Endothelial cell of umbilical vein (primary cell): ENCODE measurements at regions of chr1 and their contacts with region 1.

Region 1: DNA sequence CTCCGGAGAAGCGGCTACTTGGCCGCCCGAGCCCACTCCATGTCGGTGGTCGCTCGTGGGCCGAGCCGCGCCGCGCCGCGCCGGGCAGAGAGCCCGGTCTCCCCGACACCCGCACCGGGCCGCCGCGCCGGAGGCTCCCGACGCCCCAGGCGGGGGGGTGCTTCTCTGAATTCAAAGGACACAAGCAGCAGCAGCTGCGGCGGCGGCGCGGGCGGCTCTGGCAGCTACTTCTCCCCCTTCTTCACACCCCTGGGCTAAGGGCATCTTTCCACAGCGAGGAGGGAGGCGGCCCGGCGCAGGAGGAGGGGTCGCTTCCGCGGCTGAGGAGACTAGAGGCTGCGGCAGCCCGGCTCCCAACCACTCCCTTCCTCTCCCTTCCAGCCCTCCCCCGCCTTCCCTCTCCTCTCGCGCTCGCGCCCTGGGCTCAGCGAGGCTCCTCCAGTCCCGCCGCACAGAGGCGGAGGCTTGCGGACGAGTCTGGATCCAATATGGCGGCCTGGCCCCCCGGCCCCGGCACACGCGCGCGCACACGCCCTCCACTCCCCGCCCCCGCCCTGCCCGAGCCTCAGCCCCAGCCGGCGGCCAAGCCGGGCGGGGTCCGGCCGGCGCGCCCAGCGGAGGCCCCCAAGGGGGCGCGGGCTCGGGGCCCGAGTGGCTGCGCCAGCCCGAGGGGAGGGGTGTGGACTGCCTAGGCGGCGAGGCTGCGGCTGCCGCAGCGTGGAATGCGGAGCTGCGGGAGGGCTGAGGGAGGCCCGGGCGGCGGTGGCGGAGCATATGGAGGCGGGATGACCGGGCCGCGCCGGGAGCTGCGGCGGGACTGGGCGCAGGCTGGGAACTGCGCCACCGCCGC is at the start of gene CDC42BPA:
- DNase-seq: peak; percentile 93
- H3K4me3 ChIP-seq: peak within 1 kb of the TSS; percentile 96 to 100 (median 97)
- H3K27ac ChIP-seq: peak within 1 kb of the TSS; percentile 92
- H3K4me1 ChIP-seq: peaks cover 15% of the 10 kb centered on the region
- H3K27me3 ChIP-seq: no peaks in the 10 kb centered on the region
- CTCF ChIP-seq: peak in 1 of 2 donors; percentile 3
- POLR2A ChIP-seq: no peak
- total RNA-seq, gene CDC42BPA: 88.1 and 92.6 TPM in 2 replicates

Region 2: GRCh38 chr1:226551299-226551698 is 766.9 kb before region 1 on chr1:
- CTCF ChIA-PET with region 1: no interaction called
- POLR2A ChIA-PET with region 1: no interaction called
- dilution Hi-C with region 1: no loop called
- intact Hi-C with region 1: no loop called
- DNase-seq: no peak
- H3K4me3 ChIP-seq: no peak overlapping the region
- H3K27ac ChIP-seq: no peak overlapping the region
- H3K4me1 ChIP-seq: peaks cover 2% of the 10 kb centered on the region
- H3K27me3 ChIP-seq: peaks cover 56 to 59% of the 10 kb centered on the region in 2 experiments
- CTCF ChIP-seq: no peak
- POLR2A ChIP-seq: no peak

Region 3: GRCh38 chr1:226915672-226915995 is 402.6 kb before region 1 on chr1:
- CTCF ChIA-PET with region 1: no interaction called
- POLR2A ChIA-PET with region 1: no interaction called
- dilution Hi-C with region 1: no loop called
- intact Hi-C with region 1: no loop called
- DNase-seq: no peak
- H3K4me3 ChIP-seq: no peak overlapping the region
- H3K27ac ChIP-seq: no peak overlapping the region
- H3K4me1 ChIP-seq: no peaks in the 10 kb centered on the region
- H3K27me3 ChIP-seq: no peaks in the 10 kb centered on the region
- CTCF ChIP-seq: no peak
- POLR2A ChIP-seq: no peak

Region 4: DNA sequence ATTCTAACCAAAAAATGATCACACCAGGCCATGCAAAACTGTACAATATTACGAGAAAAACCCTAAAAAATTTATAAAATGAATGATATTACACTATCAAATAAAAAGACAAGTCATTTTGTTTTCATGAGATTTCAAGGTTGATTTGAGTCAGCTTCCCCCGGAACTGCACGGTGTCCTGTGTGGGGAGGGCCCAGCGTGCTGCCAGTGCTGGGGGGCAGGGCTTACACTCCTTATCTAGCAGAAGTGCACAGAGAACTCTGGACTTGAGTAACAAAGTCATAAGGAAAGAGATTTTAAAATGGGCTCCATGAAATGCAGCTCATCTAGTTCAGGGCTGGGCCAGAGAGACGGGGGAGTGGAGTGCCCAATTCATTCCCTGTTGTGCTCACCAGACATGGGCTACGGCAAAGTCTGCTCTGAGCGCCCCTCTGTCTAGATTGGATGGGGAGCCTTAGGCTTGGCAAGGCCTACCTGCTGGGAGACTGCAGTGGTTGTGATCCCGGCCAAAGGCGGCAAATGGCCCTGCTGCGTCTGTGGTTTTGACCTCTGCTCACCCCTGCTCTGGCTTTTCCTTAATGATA is 328.0 kb before region 1 on chr1:
- CTCF ChIA-PET with region 1: no interaction called
- POLR2A ChIA-PET with region 1: no interaction called
- dilution Hi-C with region 1: no loop called
- intact Hi-C with region 1: loop called (anchors 5 kb)
- DNase-seq: peak; percentile 73
- H3K4me3 ChIP-seq: no peak overlapping the region
- H3K27ac ChIP-seq: peak overlapping the region; percentile 23
- H3K4me1 ChIP-seq: peaks cover 23% of the 10 kb centered on the region
- H3K27me3 ChIP-seq: no peaks in the 10 kb centered on the region
- CTCF ChIP-seq: no peak
- POLR2A ChIP-seq: no peak

Region 5: GRCh38 chr1:227131193-227131592 is 187.0 kb before region 1 on chr1:
- CTCF ChIA-PET with region 1: interaction called, 3 read pairs
- POLR2A ChIA-PET with region 1: no interaction called
- dilution Hi-C with region 1: no loop called
- intact Hi-C with region 1: loop called (anchors 2 kb)
- DNase-seq: peak; percentile 51
- H3K4me3 ChIP-seq: no peak overlapping the region
- H3K27ac ChIP-seq: no peak overlapping the region
- H3K4me1 ChIP-seq: peaks cover 23% of the 10 kb centered on the region
- H3K27me3 ChIP-seq: no peaks in the 10 kb centered on the region
- CTCF ChIP-seq: peak; percentile 37 to 43
- POLR2A ChIP-seq: no peak

Region 6: DNA sequence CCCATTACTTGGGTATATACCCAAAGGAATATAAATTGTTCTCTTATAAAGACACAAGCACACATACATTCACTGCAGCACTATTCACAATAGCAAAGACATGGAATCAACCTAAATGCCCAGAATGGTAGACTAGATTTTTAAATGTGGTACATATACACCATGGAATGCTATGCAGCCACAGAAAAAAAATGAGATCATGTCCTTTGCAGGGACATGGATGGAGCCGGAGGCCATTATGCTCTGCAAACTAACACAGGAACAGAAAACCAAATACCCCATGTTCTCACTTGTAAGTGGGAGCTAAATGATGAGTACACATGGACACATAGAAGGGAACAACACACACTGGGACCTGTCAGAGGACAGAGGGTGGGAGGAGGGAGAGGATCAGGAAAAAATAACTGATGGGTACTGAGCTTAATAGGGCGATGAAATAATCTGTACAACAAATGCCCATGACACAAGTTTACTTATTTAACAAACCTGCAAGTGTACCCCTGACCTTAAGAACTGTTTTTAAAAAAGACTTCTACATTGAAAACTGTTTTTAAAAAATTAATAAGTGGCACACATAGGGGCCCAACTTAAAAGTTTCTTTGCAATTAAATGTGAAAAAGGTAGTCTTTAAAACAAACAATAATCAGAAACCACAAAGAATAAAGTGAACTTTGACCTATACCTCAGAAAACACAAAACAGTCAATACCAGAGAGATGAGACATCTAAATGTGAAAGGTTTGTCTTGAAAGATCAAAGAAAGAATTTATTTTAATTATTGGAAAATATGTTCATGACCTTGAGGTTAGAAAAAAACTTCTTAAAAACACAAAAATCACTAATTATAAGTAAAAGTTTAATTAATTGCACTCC is 75.2 kb before region 1 on chr1:
- CTCF ChIA-PET with region 1: no interaction called
- POLR2A ChIA-PET with region 1: no interaction called
- dilution Hi-C with region 1: no loop called
- intact Hi-C with region 1: no loop called
- DNase-seq: no peak
- H3K4me3 ChIP-seq: no peak overlapping the region
- H3K27ac ChIP-seq: no peak overlapping the region
- H3K4me1 ChIP-seq: peaks cover 14% of the 10 kb centered on the region
- H3K27me3 ChIP-seq: no peaks in the 10 kb centered on the region
- CTCF ChIP-seq: no peak
- POLR2A ChIP-seq: no peak

Region 7: DNA sequence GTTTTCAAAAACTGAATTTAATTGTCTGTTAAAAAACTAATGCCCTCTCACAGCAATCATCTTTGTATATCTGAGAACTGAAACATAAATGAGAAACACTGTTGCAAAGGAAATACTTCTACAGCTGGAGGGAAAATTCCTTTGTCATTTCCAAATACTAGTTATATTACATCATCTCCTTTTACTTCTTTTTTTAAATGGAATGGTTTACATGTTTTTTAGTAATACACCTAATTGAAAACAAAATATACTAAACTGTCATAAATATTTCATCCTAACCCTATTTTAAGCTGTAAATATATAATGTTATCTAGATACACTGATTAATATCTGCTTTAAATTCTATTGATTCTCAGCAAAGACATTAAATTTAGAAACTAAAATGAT is 19.0 kb before region 1 on chr1:
- CTCF ChIA-PET with region 1: interaction called, 4 read pairs
- POLR2A ChIA-PET with region 1: interaction called, 3 read pairs
- dilution Hi-C with region 1: no loop called
- intact Hi-C with region 1: loop called (anchors 1 kb)
- DNase-seq: peak; percentile 75
- H3K4me3 ChIP-seq: peak overlapping the region in 1 of 3 experiments; percentile 61
- H3K27ac ChIP-seq: peak overlapping the region; percentile 83
- H3K4me1 ChIP-seq: peaks cover 20% of the 10 kb centered on the region
- H3K27me3 ChIP-seq: no peaks in the 10 kb centered on the region
- CTCF ChIP-seq: no peak
- POLR2A ChIP-seq: no peak

Region 8: DNA sequence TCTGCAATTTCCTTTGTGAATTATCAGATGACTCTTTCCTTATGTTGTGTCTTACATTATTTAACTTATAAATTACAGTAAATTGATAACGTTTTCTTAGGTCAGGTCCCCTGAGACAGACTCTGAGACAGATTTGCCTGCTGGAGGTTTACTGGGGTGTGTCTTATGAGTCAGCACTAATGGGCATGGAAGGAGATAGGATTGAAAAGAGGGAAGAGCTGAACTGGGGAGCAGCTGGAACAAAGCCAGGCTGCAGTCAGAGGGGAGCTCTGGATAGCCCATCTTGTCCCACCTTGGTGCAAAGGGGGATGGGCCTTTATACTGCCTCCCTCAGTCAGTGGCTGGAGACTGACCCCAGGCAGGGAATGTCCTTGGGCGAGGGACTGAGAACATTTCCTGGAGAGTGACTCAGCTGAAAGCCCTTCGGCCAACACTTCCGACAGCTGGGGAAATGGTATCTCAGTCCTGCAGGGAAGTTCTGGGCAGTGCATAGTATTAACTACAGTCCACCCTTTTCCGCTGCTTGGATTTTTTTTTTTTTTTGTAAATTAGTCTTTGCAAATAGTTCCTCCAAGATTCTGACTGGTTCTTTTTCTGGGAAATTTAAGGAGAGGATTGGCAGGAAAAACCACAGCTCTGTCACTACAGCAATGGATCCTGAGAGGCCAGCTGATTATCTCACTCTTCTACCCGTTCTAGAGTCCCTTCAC is 39.1 kb after region 1 on chr1:
- CTCF ChIA-PET with region 1: interaction called, 5 read pairs
- POLR2A ChIA-PET with region 1: interaction called, 6 read pairs
- dilution Hi-C with region 1: no loop called
- intact Hi-C with region 1: loop called (anchors 1 kb)
- DNase-seq: peak; percentile 96
- H3K4me3 ChIP-seq: peak overlapping the region in 1 of 3 experiments; percentile 36
- H3K27ac ChIP-seq: peak overlapping the region; percentile 96
- H3K4me1 ChIP-seq: peaks cover 37% of the 10 kb centered on the region
- H3K27me3 ChIP-seq: no peaks in the 10 kb centered on the region
- CTCF ChIP-seq: no peak
- POLR2A ChIP-seq: peak; percentile 77

Region 9: GRCh38 chr1:227428803-227429202 is 110.6 kb after region 1 on chr1:
- CTCF ChIA-PET with region 1: interaction called, 6 read pairs
- POLR2A ChIA-PET with region 1: interaction called, 9 read pairs
- dilution Hi-C with region 1: loop called (anchors 25 kb)
- intact Hi-C with region 1: loop called (anchors 1 kb)
- DNase-seq: peak; percentile 98
- H3K4me3 ChIP-seq: peak overlapping the region in 1 of 3 experiments; percentile 6
- H3K27ac ChIP-seq: peak overlapping the region; percentile 99
- H3K4me1 ChIP-seq: peaks cover 55% of the 10 kb centered on the region
- H3K27me3 ChIP-seq: no peaks in the 10 kb centered on the region
- CTCF ChIP-seq: no peak
- POLR2A ChIP-seq: peak; percentile 40